Activated naive CD4-positive, alpha-beta T cell treated with anti-CD3 and anti-CD28 coated beads for 36 hours (primary cell): ENCODE measurements at regions of chr10 and their contacts with region 1.

Region 1: DNA sequence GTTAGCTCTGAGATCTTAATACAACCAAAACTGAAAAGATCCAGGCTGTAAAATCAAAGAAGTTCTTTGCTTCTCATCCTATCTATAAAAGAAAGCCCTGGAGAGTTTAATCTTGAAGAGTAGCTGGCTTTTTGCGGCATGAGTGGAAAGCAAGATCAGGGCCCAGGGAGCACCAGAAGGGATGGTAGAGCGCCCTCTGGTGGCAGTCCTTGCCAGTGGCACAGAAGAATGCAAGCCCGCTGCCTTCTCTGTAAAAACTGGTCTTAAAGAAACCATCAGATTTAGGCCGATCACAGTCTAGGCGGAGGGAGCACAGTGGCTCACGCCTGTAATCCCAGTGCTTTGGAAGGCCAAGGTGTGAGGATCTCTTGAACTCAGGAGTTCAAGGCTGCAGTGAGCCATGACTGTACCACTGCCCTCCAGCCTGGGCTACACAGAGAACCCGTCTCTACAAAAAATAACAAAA is 35.6 kb downstream of the CPN1 start:
- DNase-seq: peak; percentile 91
- H3K4me3 Mint-ChIP-seq: no peak overlapping the region
- H3K27ac Mint-ChIP-seq: no peak overlapping the region
- H3K4me1 Mint-ChIP-seq: peaks cover 7% of the 10 kb centered on the region
- H3K27me3 Mint-ChIP-seq: peaks cover 7% of the 10 kb centered on the region

Region 2: GRCh38 chr10:99845837-99846382 is 200.1 kb before region 1 on chr10:
- CTCF ChIA-PET with region 1: interaction called, 172 read pairs
- intact Hi-C with region 1: loop called (anchors 1 kb)
- DNase-seq: peak; percentile 82
- H3K4me3 Mint-ChIP-seq: no peak overlapping the region
- H3K27ac Mint-ChIP-seq: no peak overlapping the region
- H3K4me1 Mint-ChIP-seq: peaks cover 4% of the 10 kb centered on the region
- H3K27me3 Mint-ChIP-seq: no peaks in the 10 kb centered on the region

Region 3: GRCh38 chr10:99870123-99870730 is 175.8 kb before region 1 on chr10:
- CTCF ChIA-PET with region 1: interaction called, 10 read pairs
- intact Hi-C with region 1: no loop called
- DNase-seq: peak; percentile 75
- H3K4me3 Mint-ChIP-seq: no peak overlapping the region
- H3K27ac Mint-ChIP-seq: peak overlapping the region; percentile 46
- H3K4me1 Mint-ChIP-seq: peaks cover 14% of the 10 kb centered on the region
- H3K27me3 Mint-ChIP-seq: peaks cover 80% of the 10 kb centered on the region

Region 4: GRCh38 chr10:100009793-100010676 is 36.0 kb before region 1 on chr10 and contains the start of gene DNMBP:
- CTCF ChIA-PET with region 1: interaction called, 6 read pairs
- intact Hi-C with region 1: loop called (anchors 1 kb)
- DNase-seq: peak; percentile 82
- H3K4me3 Mint-ChIP-seq: peak within 1 kb of the TSS; percentile 85
- H3K27ac Mint-ChIP-seq: peak within 1 kb of the TSS; percentile 37
- H3K4me1 Mint-ChIP-seq: peaks cover 38% of the 10 kb centered on the region
- H3K27me3 Mint-ChIP-seq: peaks cover 7% of the 10 kb centered on the region
- total RNA-seq, gene DNMBP: 2.2 to 2.4 TPM

Region 5: DNA sequence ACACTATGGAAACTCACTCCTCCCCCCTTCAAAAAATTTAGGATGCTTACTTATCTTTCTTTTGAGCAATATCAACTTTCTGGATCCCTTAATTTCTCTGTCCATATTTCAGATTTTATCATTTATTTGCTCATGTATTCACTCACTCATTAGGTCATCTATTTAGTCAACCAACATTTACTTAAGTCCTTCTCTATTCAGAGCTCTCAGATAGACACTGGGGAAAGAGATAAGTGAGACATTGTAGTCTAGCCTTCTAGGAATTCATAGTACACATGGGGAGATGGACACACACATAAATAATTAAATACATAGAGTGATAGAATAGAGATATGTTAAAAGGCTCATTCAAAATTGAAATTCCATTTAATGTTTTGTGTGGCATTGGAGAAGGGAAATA is 26.5 kb after region 1 on chr10:
- CTCF ChIA-PET with region 1: no interaction called
- intact Hi-C with region 1: no loop called
- DNase-seq: no peak
- H3K4me3 Mint-ChIP-seq: no peak overlapping the region
- H3K27ac Mint-ChIP-seq: no peak overlapping the region
- H3K4me1 Mint-ChIP-seq: no peaks in the 10 kb centered on the region
- H3K27me3 Mint-ChIP-seq: peaks cover 1% of the 10 kb centered on the region

Region 6: GRCh38 chr10:100185364-100186252 is 139.6 kb after region 1 on chr10 and contains the start of gene ERLIN1:
- CTCF ChIA-PET with region 1: no interaction called
- intact Hi-C with region 1: loop called (anchors 5 kb)
- DNase-seq: peak; percentile 95
- H3K4me3 Mint-ChIP-seq: peak within 1 kb of the TSS; percentile 96
- H3K27ac Mint-ChIP-seq: peak within 1 kb of the TSS; percentile 95
- H3K4me1 Mint-ChIP-seq: peaks cover 58% of the 10 kb centered on the region
- H3K27me3 Mint-ChIP-seq: no peaks in the 10 kb centered on the region
- total RNA-seq, gene ERLIN1: 18.4 to 18.7 TPM